Activated CD4-positive, alpha-beta memory T cell treated with anti-CD3 and anti-CD28 coated beads for 36 hours (primary cell): ENCODE measurements at regions of chr4 and their contacts with region 1.

Region 1: GRCh38 chr4:121192480-121192879 is 28.4 kb upstream of the TNIP3 start:
- DNase-seq: peak; percentile 33
- H3K4me3 Mint-ChIP-seq: no peak overlapping the region
- H3K27ac Mint-ChIP-seq: peak overlapping the region; percentile 11
- H3K4me1 Mint-ChIP-seq: peaks cover 63% of the 10 kb centered on the region
- H3K27me3 Mint-ChIP-seq: no peaks in the 10 kb centered on the region

Region 2: DNA sequence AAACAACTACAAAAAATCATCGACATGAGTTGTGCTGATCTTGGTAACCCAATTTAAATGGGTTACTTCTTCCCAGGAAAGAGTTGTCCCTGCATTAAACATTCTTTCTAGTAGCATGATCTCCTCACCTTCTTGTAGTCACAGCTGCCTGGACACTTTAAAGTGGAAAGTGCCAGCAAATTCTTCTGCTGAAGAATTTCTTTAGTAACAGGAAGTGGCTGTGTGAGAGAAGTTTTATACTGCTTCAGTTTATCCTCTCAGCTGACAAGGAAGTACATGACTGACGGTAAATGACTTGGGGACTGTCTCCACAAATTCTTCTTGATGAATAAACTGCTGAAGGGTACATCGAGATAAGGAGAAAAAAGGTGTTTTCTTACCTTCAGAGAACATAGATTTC is 10.2 kb before region 1 on chr4:
- CTCF ChIA-PET with region 1: interaction called, 28 read pairs
- POLR2A ChIA-PET with region 1: no interaction called
- intact Hi-C with region 1: loop called (anchors 1 kb)
- DNase-seq: no peak
- H3K4me3 Mint-ChIP-seq: peak overlapping the region; percentile 74
- H3K27ac Mint-ChIP-seq: peak overlapping the region; percentile 87
- H3K4me1 Mint-ChIP-seq: peaks cover 72% of the 10 kb centered on the region
- H3K27me3 Mint-ChIP-seq: no peaks in the 10 kb centered on the region

Region 3: DNA sequence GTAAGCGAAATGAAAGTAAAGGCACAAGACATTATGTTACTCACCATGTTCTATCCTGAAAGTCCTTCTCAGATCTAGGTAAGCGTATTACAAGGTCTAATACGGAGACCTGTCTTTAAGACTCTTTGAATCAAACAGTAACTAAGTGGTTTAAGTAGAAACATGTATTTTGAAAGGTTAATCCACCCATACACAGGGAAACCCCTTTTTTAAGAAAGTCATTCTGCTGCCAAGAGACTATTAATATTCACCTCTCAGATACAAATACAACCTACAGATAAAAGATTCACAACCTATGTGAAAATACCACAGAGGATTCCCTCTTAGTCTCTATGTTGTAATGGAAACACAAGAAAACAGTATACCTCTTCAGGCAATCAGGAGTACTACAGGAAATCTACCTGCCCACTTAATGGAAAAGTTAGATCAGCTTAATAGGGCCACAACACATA is 34.9 kb after region 1 on chr4:
- CTCF ChIA-PET with region 1: interaction called, 19 read pairs
- POLR2A ChIA-PET with region 1: no interaction called
- intact Hi-C with region 1: loop called (anchors 1 kb)
- DNase-seq: no peak
- H3K4me3 Mint-ChIP-seq: peak overlapping the region; percentile 72
- H3K27ac Mint-ChIP-seq: peak overlapping the region; percentile 86
- H3K4me1 Mint-ChIP-seq: peaks cover 59% of the 10 kb centered on the region
- H3K27me3 Mint-ChIP-seq: no peaks in the 10 kb centered on the region

Region 4: DNA sequence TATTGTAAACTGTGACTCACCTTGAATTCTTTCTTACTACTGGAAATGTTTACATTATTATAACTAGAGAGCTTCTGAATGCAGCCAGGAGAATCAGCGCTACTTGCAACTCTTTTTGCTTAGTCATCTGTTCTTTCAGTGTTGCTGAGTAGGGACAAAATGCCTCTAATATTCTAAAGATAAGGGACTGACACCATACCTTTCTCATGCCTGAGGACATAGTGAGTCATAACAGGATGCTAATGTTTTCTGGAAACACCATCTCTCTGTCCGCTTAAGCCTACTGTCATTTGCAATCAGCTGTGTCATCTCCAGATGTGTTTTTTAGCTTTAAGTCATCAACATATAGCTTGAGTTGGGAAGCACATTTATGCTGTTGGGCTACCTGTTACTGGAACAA is 80.0 kb after region 1 on chr4:
- CTCF ChIA-PET with region 1: interaction called, 33 read pairs
- POLR2A ChIA-PET with region 1: interaction called, 3 read pairs
- intact Hi-C with region 1: no loop called
- DNase-seq: no peak
- H3K4me3 Mint-ChIP-seq: no peak overlapping the region
- H3K27ac Mint-ChIP-seq: peak overlapping the region; percentile 56
- H3K4me1 Mint-ChIP-seq: peaks cover 16% of the 10 kb centered on the region
- H3K27me3 Mint-ChIP-seq: peaks cover 7% of the 10 kb centered on the region

Region 5: DNA sequence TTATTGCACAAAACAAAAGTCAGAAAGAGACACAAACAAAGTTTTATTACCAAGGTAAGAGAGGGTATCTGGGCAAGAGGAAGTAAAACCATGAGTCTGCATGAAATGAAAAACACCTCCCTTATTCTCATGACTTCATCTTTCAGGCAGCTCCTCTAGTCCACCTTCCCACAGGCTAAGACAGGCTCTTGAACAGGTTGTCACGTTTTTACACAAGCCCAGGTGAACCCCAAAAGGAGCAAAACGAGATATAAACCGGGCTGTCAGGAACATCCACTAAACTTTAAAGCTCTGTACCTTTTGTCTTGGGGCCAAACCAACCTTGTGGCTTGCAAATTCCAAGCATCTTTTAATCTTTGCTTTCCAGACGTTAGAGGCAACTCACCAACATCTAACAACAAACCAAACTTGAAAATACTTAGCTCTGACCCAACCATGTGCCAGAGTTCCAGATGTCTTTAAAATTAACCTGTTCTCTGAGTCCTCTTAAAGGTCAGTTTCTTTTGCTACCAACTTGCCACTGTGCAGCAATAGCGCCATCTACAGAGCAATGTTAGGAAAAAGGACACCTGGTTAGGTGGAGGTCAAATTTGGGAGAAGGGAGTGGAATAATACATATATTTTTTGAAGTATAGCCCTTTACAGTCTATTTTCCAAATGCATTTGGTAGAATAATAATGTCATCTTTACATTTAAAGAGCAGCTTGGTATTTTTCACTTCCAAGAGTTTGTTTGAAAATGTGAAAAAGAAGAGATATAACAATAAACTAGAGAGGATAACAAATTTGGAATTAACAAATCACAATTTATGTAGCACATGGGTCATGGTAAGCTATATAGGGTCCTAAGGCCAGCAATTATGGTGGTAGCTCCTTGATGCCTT is 115.2 kb after region 1 on chr4:
- CTCF ChIA-PET with region 1: interaction called, 119 read pairs
- POLR2A ChIA-PET with region 1: interaction called, 5 read pairs
- intact Hi-C with region 1: loop called (anchors 1 kb)
- DNase-seq: peak; percentile 58
- H3K4me3 Mint-ChIP-seq: peak overlapping the region; percentile 7
- H3K27ac Mint-ChIP-seq: peak overlapping the region; percentile 75
- H3K4me1 Mint-ChIP-seq: peaks cover 18% of the 10 kb centered on the region
- H3K27me3 Mint-ChIP-seq: no peaks in the 10 kb centered on the region

Region 6: GRCh38 chr4:121656269-121656641 is 463.8 kb after region 1 on chr4:
- CTCF ChIA-PET with region 1: interaction called, 3 read pairs
- POLR2A ChIA-PET with region 1: no interaction called
- intact Hi-C with region 1: loop called (anchors 2 kb)
- DNase-seq: peak; percentile 42
- H3K4me3 Mint-ChIP-seq: no peak overlapping the region
- H3K27ac Mint-ChIP-seq: no peak overlapping the region
- H3K4me1 Mint-ChIP-seq: no peaks in the 10 kb centered on the region
- H3K27me3 Mint-ChIP-seq: no peaks in the 10 kb centered on the region